H1 (cell line): ENCODE measurements at regions of chr12 and their contacts with region 1.

Region 1: GRCh38 chr12:121793838-121794533 is 498 bp upstream of the RHOF start:
- DNase-seq: peak; percentile 87 to 98
- H3K4me3 ChIP-seq: peak overlapping the region; percentile 60 to 91 (median 66)
- H3K27ac ChIP-seq: no peak overlapping the region
- H3K4me1 ChIP-seq: peaks cover 11 to 38% (median 24%) of the 10 kb centered on the region in 4 experiments
- H3K27me3 ChIP-seq: peaks cover 0 to 5% (median 1%) of the 10 kb centered on the region in 4 experiments; a peak in 2 of 7 replicates
- CTCF ChIP-seq: peak in 2 of 3 experiments; percentile 100; a peak in 3 of 4 replicates
- EP300 ChIP-seq: peak; percentile 34 to 40; a peak in 2 of 3 replicates
- POLR2A ChIP-seq: no peak; a peak in 1 of 3 replicates
- RAD21 ChIP-seq: peak; percentile 85 to 91

Region 2: GRCh38 chr12:121688966-121689365 is 105.0 kb before region 1 on chr12:
- CTCF ChIA-PET with region 1: interaction called, 18 read pairs
- POLR2A ChIA-PET with region 1: interaction called, 3 read pairs
- DNase-seq: no peak
- H3K4me3 ChIP-seq: no peak overlapping the region
- H3K27ac ChIP-seq: no peak overlapping the region
- H3K4me1 ChIP-seq: peaks cover 0 to 3% (median 0%) of the 10 kb centered on the region in 4 experiments; a peak in 2 of 7 replicates
- H3K27me3 ChIP-seq: no peaks in the 10 kb centered on the region
- CTCF ChIP-seq: no peak
- EP300 ChIP-seq: no peak
- POLR2A ChIP-seq: no peak
- RAD21 ChIP-seq: no peak

Region 3: DNA sequence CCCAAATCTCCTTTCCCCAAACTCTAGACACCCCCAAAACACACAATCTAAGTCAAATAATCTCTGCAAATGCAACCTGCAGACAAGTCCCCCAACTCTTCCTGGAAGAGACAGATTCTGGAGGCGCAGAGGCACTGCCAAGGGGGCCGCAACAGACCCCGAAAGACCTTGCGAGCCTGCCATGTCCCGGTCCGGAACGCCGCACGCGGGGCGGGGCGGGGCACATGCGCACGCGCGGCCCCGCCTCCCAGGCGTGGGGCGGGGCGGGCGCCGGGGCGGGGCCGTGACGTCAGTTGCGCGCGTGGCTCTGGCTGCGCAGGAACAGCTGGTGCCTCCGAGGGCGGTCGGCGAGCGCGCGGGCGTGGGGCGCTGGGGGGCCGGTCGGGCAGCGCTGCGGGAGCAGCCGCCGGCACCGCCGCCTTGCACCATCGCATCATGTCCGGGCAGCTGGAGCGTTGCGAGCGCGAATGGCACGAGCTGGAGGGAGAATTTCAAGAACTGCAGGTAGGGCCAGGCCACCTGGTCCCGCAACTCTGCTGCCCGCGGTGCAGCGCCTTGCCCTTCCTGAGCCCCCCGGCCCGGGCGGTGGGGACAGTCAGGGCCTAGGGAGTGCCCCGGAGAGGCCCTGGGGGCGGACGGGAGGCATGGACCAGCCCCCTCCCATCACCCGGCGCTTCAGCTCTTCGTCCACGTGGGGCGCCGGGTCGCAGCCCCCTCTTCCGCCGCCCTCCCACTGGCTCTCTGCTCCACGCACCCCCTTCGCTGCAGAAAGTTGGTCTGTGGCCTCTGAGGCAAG is 81.3 kb before region 1 on chr12 and contains the start of gene TMEM120B:
- CTCF ChIA-PET with region 1: interaction called, 27 read pairs
- POLR2A ChIA-PET with region 1: interaction called, 5 read pairs
- DNase-seq: peak in 1 of 2 experiments; percentile 88
- H3K4me3 ChIP-seq: peak within 1 kb of the TSS; percentile 79 to 91 (median 87)
- H3K27ac ChIP-seq: no peak within 1 kb of the TSS
- H3K4me1 ChIP-seq: peaks cover 0 to 14% (median 4%) of the 10 kb centered on the region in 4 experiments; a peak in 5 of 7 replicates
- H3K27me3 ChIP-seq: no peaks in the 10 kb centered on the region
- CTCF ChIP-seq: peak in 2 of 3 experiments; percentile 26 to 32; a peak in 2 of 4 replicates
- EP300 ChIP-seq: no peak
- POLR2A ChIP-seq: peak in 1 of 2 experiments; percentile 52; a peak in 1 of 3 replicates
- RAD21 ChIP-seq: no peak
- total RNA-seq, gene TMEM120B: 26.0 and 29.1 TPM in 2 replicates

Region 4: DNA sequence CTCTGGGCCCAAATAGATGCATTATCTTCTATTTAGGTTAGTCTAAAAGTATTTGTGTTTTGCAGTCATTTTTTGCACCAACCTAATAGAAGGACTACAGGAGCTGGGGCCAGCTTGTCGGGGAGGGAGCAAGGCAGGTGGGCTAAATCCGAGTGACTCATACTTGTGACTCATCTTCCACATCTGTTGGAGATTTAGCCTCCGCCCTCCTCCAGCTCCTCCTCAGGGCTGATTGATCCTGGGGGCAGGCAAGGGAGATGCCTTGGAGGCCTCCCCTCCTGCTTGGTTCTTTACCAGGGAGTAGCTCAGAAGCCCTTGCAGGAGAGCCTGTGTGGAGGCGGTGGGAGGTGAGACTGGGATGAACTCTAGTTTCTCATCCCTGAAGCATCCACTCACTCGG is 28.4 kb before region 1 on chr12:
- CTCF ChIA-PET with region 1: interaction called, 335 read pairs
- POLR2A ChIA-PET with region 1: interaction called, 958 read pairs
- DNase-seq: no peak
- H3K4me3 ChIP-seq: no peak overlapping the region
- H3K27ac ChIP-seq: no peak overlapping the region
- H3K4me1 ChIP-seq: no peaks in the 10 kb centered on the region; a peak in 2 of 7 replicates
- H3K27me3 ChIP-seq: no peaks in the 10 kb centered on the region
- CTCF ChIP-seq: no peak
- EP300 ChIP-seq: no peak
- POLR2A ChIP-seq: no peak
- RAD21 ChIP-seq: no peak

Region 5: DNA sequence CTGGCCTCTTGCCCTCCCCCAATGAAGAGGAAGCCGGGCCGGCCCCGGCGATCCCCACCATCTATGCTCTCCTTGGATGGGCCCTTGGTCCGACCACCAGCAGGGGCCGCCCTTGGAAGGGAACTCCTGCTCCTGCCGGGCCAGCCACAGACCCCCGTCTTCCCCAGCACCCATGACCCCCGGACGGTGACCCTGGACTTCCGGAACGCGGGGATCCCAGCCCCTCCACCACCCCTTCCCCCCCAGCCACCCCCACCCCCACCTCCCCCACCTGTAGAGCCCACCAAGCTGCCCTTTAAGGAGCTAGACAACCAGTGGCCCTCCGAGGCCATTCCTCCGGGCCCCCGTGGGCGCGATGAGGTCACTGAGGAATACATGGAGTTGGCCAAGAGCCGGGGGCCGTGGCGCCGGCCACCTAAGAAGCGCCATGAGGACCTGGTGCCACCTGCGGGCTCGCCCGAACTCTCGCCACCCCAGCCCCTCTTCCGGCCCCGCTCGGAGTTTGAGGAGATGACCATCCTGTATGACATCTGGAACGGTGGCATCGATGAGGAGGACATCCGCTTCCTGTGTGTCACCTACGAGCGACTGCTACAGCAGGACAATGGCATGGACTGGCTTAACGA is 29.2 kb after region 1 on chr12:
- CTCF ChIA-PET with region 1: interaction called, 163 read pairs
- POLR2A ChIA-PET with region 1: interaction called, 33 read pairs
- DNase-seq: no peak
- H3K4me3 ChIP-seq: no peak overlapping the region
- H3K27ac ChIP-seq: no peak overlapping the region
- H3K4me1 ChIP-seq: no peaks in the 10 kb centered on the region
- H3K27me3 ChIP-seq: no peaks in the 10 kb centered on the region
- CTCF ChIP-seq: peak; percentile 28 to 54 (median 37); a peak in 3 of 4 replicates
- EP300 ChIP-seq: no peak
- POLR2A ChIP-seq: no peak
- RAD21 ChIP-seq: peak; percentile 36 to 45; a peak in 3 of 4 replicates

Region 6: GRCh38 chr12:121883315-121883660 is 89.3 kb after region 1 on chr12:
- CTCF ChIA-PET with region 1: interaction called, 114 read pairs
- POLR2A ChIA-PET with region 1: interaction called, 115 read pairs
- DNase-seq: no peak
- H3K4me3 ChIP-seq: no peak overlapping the region
- H3K27ac ChIP-seq: no peak overlapping the region
- H3K4me1 ChIP-seq: peaks cover 0 to 5% (median 0%) of the 10 kb centered on the region in 4 experiments; a peak in 3 of 7 replicates
- H3K27me3 ChIP-seq: no peaks in the 10 kb centered on the region
- CTCF ChIP-seq: no peak
- EP300 ChIP-seq: no peak
- POLR2A ChIP-seq: no peak
- RAD21 ChIP-seq: no peak

Region 7: GRCh38 chr12:121917979-121918678 is 124.1 kb after region 1 on chr12 and contains the start of gene CFAP251:
- CTCF ChIA-PET with region 1: interaction called, 13 read pairs
- POLR2A ChIA-PET with region 1: no interaction called
- DNase-seq: peak; percentile 88 to 97
- H3K4me3 ChIP-seq: peak within 1 kb of the TSS; percentile 26 to 66 (median 53)
- H3K27ac ChIP-seq: no peak within 1 kb of the TSS
- H3K4me1 ChIP-seq: peaks cover 0 to 7% (median 2%) of the 10 kb centered on the region in 4 experiments; a peak in 4 of 7 replicates
- H3K27me3 ChIP-seq: no peaks in the 10 kb centered on the region
- CTCF ChIP-seq: peak; percentile 78 to 96 (median 95)
- EP300 ChIP-seq: peak in 1 of 2 experiments; percentile 8; a peak in 1 of 3 replicates
- POLR2A ChIP-seq: no peak
- RAD21 ChIP-seq: peak; percentile 79 to 83
- total RNA-seq, gene CFAP251: 2.9 and 3.3 TPM in 2 replicates

Region 8: DNA sequence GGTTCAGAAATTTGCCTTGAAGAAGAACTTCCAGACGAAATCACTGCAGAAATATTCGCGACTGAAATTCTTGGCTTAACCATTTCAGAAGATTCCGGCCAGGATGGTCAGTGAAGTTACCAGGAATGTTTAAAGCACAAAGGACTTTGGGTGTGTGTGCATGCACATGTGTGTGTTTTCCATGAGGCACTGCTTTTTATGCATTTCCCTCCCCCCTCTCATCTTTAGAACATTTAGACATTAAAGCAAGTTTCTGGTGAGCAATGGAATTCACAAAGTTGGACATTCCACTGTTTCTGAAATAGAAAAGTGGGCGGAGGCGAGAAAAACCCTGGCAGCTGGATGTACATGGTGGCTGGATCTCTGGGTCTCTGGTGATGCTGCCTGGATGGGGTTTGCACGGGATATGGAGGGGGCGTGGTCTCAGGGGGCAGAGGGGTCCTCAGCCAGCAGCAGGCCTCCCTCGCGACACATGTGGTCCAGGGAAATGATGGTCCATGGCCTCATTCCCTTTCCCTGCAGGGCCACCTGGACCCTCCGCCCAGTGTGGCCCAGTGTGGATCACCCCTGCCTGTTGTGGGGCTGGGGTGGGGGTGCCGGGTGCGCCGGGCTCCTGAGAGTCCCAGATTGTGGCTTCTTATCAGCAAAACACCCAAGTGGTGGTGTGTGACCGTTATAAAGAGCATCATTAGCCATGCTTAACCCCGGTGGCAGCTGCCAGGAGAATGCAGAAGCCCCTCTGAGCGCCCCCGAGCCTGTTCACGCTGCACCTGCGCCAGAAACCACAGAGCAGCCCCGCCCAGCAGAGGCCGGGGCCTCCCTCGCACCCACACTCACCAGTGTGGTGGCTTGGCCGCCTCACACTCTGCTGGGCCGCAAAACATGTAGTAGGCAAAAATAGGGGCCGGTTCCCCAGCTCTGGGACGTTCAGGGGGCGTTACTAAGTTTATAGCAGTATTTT is 209.9 kb after region 1 on chr12:
- CTCF ChIA-PET with region 1: no interaction called
- POLR2A ChIA-PET with region 1: no interaction called
- DNase-seq: no peak
- H3K4me3 ChIP-seq: no peak overlapping the region
- H3K27ac ChIP-seq: no peak overlapping the region
- H3K4me1 ChIP-seq: peaks cover 0 to 3% (median 0%) of the 10 kb centered on the region in 4 experiments; a peak in 2 of 7 replicates
- H3K27me3 ChIP-seq: no peaks in the 10 kb centered on the region
- CTCF ChIP-seq: no peak
- EP300 ChIP-seq: no peak
- POLR2A ChIP-seq: no peak
- RAD21 ChIP-seq: no peak